IMR-90 (cell line): ENCODE measurements at regions of chr20 and their contacts with region 1.

Region 1: DNA sequence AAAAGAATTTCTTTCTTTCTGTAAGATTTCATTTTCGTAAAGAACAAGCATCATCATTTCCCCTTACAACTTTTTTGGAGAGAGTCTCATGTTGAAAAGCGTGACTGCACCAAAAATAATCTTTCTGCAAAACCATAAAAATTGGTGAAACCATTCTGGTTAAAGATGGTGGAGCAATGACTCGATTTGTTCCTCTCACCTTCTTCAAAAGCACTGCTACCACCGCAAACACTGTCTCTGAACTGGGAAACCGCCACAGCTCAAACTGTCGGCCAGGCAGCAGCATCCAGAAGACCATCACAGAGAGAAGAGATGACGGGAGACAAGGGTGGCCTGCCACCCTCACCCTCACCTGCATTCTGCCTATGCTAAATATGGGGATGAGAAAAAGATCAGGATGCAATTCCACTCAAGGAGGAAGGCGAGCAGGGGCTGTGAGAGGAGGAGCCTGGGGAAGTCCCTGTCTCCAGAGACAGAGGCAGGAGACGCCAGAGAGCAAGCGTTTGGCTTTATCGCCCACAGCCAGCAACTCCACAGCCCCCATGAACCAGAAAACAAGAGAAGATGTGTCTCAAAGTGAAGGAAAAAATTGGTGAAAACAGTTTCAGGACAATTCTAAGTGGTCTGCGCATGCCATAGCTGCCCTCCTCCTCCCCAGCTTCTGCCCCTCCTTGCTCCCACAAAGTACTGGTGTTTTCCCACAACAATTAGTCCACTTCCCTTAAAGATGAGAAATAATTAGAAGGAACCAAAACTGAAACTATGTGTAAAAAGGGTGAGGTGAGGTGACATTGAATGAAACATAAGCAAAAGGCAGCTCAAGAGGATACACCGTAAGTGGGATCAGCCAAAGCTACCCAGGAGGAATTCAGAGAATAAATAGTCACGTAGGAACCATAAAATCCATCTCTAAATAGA is 255.5 kb downstream of the KIF16B start:
- DNase-seq: no peak
- ATAC-seq: no peak
- H3K4me3 ChIP-seq: no peak overlapping the region
- H3K27ac ChIP-seq: no peak overlapping the region
- H3K4me1 ChIP-seq: no peaks in the 10 kb centered on the region
- H3K27me3 ChIP-seq: no peaks in the 10 kb centered on the region
- CTCF ChIP-seq: no peak
- POLR2A ChIP-seq: no peak
- RAD21 ChIP-seq: no peak

Region 2: DNA sequence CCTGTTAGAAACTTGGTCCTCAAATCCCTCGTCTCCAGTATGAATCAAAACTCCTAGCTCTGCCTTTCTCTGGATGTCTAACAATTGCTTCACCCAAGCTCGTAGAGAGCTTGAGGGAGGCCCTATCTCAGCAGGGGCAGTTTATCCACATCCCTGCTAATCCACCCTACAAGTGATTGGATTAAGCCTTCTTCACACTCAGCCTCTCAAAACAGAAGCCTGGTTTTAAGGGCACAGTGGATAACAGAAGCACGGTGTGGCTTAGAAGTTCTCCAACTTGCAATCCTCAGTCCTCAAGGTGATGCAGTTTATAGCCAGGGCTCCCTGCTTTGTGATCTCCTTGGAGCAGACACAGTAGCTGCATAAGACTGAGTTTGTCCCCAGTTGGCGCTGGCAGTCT is 128.3 kb before region 1 on chr20:
- CTCF ChIA-PET with region 1: no interaction called
- POLR2A ChIA-PET with region 1: no interaction called
- dilution Hi-C with region 1: no loop called
- in situ Hi-C with region 1: no loop called
- intact Hi-C with region 1: no loop called
- DNase-seq: no peak
- ATAC-seq: no peak
- H3K4me3 ChIP-seq: no peak overlapping the region
- H3K27ac ChIP-seq: no peak overlapping the region
- H3K4me1 ChIP-seq: no peaks in the 10 kb centered on the region
- H3K27me3 ChIP-seq: no peaks in the 10 kb centered on the region
- CTCF ChIP-seq: no peak
- POLR2A ChIP-seq: no peak
- RAD21 ChIP-seq: no peak

Region 3: GRCh38 chr20:16257021-16257420 is 60.7 kb before region 1 on chr20:
- CTCF ChIA-PET with region 1: no interaction called
- POLR2A ChIA-PET with region 1: no interaction called
- dilution Hi-C with region 1: no loop called
- in situ Hi-C with region 1: no loop called
- intact Hi-C with region 1: no loop called
- DNase-seq: no peak
- ATAC-seq: no peak
- H3K4me3 ChIP-seq: no peak overlapping the region
- H3K27ac ChIP-seq: no peak overlapping the region
- H3K4me1 ChIP-seq: no peaks in the 10 kb centered on the region
- H3K27me3 ChIP-seq: no peaks in the 10 kb centered on the region
- CTCF ChIP-seq: no peak
- POLR2A ChIP-seq: no peak
- RAD21 ChIP-seq: no peak

Region 4: GRCh38 chr20:16337707-16338106 is 20.0 kb after region 1 on chr20:
- CTCF ChIA-PET with region 1: interaction called, 3 read pairs
- POLR2A ChIA-PET with region 1: interaction called, 10 read pairs
- dilution Hi-C with region 1: no loop called
- in situ Hi-C with region 1: no loop called
- intact Hi-C with region 1: no loop called
- DNase-seq: no peak
- ATAC-seq: no peak
- H3K4me3 ChIP-seq: no peak overlapping the region
- H3K27ac ChIP-seq: no peak overlapping the region
- H3K4me1 ChIP-seq: no peaks in the 10 kb centered on the region
- H3K27me3 ChIP-seq: no peaks in the 10 kb centered on the region
- CTCF ChIP-seq: no peak
- POLR2A ChIP-seq: no peak
- RAD21 ChIP-seq: no peak